ENCODE measurements at regions of chr5 and their contacts with region 1.

Region 1: GRCh38 chr5:103808464-103809106 is 246.0 kb upstream of the NUDT12 start:
- H3K4me3 ChIP-seq: no peak overlapping the region
- H3K27ac ChIP-seq: no peak overlapping the region
- H3K4me1 ChIP-seq: no peaks in the 10 kb centered on the region
- CTCF ChIP-seq: peak; percentile 85

Region 2: GRCh38 chr5:103582364-103582763 is 226.2 kb before region 1 on chr5:
- CTCF ChIA-PET with region 1: interaction called, 24 read pairs
- POLR2A ChIA-PET with region 1: no interaction called
- H3K4me3 ChIP-seq: no peak overlapping the region
- H3K27ac ChIP-seq: no peak overlapping the region
- H3K4me1 ChIP-seq: no peaks in the 10 kb centered on the region
- CTCF ChIP-seq: no peak

Region 3: DNA sequence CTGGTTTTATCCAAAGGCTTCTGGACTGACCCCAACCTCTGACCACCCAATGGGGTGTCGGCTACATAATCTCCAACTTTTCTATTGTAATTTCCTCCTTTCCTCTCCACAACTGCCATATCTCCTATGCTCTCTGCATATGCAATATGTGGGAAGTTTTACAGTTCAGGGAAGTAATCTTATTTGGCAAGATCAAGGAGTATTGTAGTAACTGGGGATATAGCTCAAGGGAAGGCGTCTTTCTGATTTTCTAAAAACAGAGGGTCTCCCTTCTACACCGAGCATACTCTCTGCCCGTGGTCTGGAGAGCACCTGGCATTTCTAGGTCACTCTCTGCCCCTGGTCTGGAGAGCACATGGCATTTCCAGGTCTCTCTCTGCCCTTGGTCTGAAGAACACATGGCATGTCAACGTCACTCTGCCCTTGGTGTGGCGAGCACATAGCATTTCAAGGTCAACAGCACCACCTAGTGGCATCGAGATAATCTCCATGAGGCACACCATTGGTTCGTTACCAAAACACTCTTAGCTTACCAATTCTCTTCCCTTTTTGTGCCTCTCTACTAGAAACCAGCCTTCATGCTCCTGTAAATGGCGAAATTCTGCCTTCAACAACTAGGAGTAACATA is 370.4 kb after region 1 on chr5:
- CTCF ChIA-PET with region 1: interaction called, 40 read pairs
- POLR2A ChIA-PET with region 1: no interaction called
- H3K4me3 ChIP-seq: no peak overlapping the region
- H3K27ac ChIP-seq: no peak overlapping the region
- H3K4me1 ChIP-seq: no peaks in the 10 kb centered on the region
- CTCF ChIP-seq: peak; percentile 95